ENCODE measurements at regions of chr16 and their contacts with region 1.

Region 1: GRCh38 chr16:69754469-69755310 is at the start of gene NOB1:
- DNase-seq: peak; percentile 95 to 100
- ATAC-seq: peak; percentile 97 to 98 (median 98)
- H3K4me3 ChIP-seq: peak within 1 kb of the TSS; percentile 78
- H3K4me3 Mint-ChIP-seq: peak within 1 kb of the TSS; percentile 100
- H3K27ac ChIP-seq: peak within 1 kb of the TSS; percentile 51
- H3K27ac Mint-ChIP-seq: peak within 1 kb of the TSS; percentile 97 to 99
- H3K4me1 ChIP-seq: peaks cover 14% of the 10 kb centered on the region
- H3K4me1 Mint-ChIP-seq: peaks cover 14 to 28% of the 10 kb centered on the region in 2 donors
- H3K27me3 ChIP-seq: no peaks in the 10 kb centered on the region
- H3K27me3 Mint-ChIP-seq: no peaks in the 10 kb centered on the region
- CTCF ChIP-seq: peak; percentile 96
- total RNA-seq, gene NOB1: 20.9 to 34.4 (median 32.0) TPM

Region 2: DNA sequence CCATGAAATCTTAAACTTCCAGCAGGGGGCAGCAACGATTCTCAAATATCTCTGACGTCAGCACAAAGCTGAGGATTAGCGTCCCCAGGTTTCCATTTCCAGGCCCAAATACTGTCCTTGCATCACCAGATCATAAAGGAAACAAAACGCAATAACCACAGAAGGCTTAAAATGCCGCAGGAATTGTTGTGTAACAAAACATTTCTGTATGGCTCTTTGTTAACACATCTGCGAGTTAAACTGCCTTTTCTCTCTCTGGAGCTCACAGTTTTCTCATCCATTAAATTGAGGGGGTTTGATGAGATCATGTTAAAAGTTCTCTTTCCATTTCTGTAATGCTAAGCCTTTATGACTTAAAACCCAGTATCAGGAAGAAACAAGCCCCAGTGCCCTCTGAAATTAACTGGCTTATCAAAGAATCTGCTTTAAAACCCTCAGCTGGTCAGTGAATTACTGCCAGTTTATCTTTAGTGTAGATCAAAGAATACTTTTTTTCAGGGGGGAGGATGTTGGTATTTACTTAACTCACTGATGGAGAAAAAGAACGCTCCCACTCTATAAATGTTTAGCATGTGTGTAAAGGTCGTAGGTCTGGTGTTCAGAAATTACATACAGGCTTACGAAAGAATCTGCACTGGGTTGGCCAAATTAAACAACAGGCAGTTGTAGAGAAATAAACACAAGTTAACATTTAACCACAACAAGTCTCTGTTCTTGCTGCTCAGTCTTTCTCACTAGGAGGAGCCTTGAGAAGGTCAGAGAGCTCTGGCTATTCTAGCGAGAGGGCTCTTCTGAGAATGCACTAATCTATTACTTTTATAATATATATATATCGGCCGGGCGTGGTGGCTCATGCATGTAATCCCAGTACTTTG is 358.3 kb before region 1 on chr16:
- intact Hi-C with region 1: loop called (anchors 5 kb)
- DNase-seq: peak; percentile 54 to 90
- ATAC-seq: peak; percentile 72 to 97 (median 80)
- H3K4me3 ChIP-seq: no peak overlapping the region
- H3K4me3 Mint-ChIP-seq: peak overlapping the region; percentile 13
- H3K27ac ChIP-seq: peak overlapping the region; percentile 50
- H3K27ac Mint-ChIP-seq: peak overlapping the region; percentile 41 to 81
- H3K4me1 ChIP-seq: no peaks in the 10 kb centered on the region
- H3K4me1 Mint-ChIP-seq: peaks cover 5 to 7% of the 10 kb centered on the region in 2 donors
- H3K27me3 ChIP-seq: no peaks in the 10 kb centered on the region
- H3K27me3 Mint-ChIP-seq: no peaks in the 10 kb centered on the region
- CTCF ChIP-seq: peak; percentile 8

Region 3: GRCh38 chr16:69709456-69710084 is 45.1 kb before region 1 on chr16:
- intact Hi-C with region 1: loop called (anchors 1 kb)
- DNase-seq: peak in 1 of 2 donors; percentile 81
- ATAC-seq: peak in 2 of 3 donors; percentile 62 to 70
- H3K4me3 ChIP-seq: no peak overlapping the region
- H3K4me3 Mint-ChIP-seq: no peak overlapping the region
- H3K27ac ChIP-seq: no peak overlapping the region
- H3K27ac Mint-ChIP-seq: peak overlapping the region; percentile 32 to 65
- H3K4me1 ChIP-seq: no peaks in the 10 kb centered on the region
- H3K4me1 Mint-ChIP-seq: peaks cover 0 to 7% of the 10 kb centered on the region in 2 donors
- H3K27me3 ChIP-seq: no peaks in the 10 kb centered on the region
- H3K27me3 Mint-ChIP-seq: no peaks in the 10 kb centered on the region
- CTCF ChIP-seq: peak; percentile 77

Region 4: GRCh38 chr16:69726296-69727060 is 28.2 kb before region 1 on chr16 and contains the start of gene NQO1:
- intact Hi-C with region 1: loop called (anchors 2 kb)
- DNase-seq: peak; percentile 78 to 85
- ATAC-seq: peak; percentile 98 to 99 (median 98)
- H3K4me3 ChIP-seq: peak within 1 kb of the TSS; percentile 60
- H3K4me3 Mint-ChIP-seq: peak within 1 kb of the TSS; percentile 95
- H3K27ac ChIP-seq: peak within 1 kb of the TSS; percentile 69
- H3K27ac Mint-ChIP-seq: peak within 1 kb of the TSS; percentile 86 to 97
- H3K4me1 ChIP-seq: peaks cover 20% of the 10 kb centered on the region
- H3K4me1 Mint-ChIP-seq: peaks cover 17 to 19% of the 10 kb centered on the region in 2 donors
- H3K27me3 ChIP-seq: no peaks in the 10 kb centered on the region
- H3K27me3 Mint-ChIP-seq: no peaks in the 10 kb centered on the region
- CTCF ChIP-seq: no peak
- total RNA-seq, gene NQO1: 4.0 to 4.8 (median 4.5) TPM

Measured in natural killer cell (primary cell).